ENCODE measurements at regions of chr2 and their contacts with region 1.

Region 1: GRCh38 chr2:156332534-156333273 is at the start of gene NR4A2:
- DNase-seq: no peak
- H3K4me3 ChIP-seq: peak within 1 kb of the TSS; percentile 75 to 84 (median 80)
- H3K27ac ChIP-seq: peak within 1 kb of the TSS; percentile 97 to 100 (median 99)
- H3K4me1 ChIP-seq: peaks cover 9 to 48% (median 34%) of the 10 kb centered on the region in 4 donors
- H3K27me3 ChIP-seq: no peaks in the 10 kb centered on the region
- CTCF ChIP-seq: no peak
- EP300 ChIP-seq: no peak
- POLR2A ChIP-seq: peak; percentile 83
- total RNA-seq, gene NR4A2: 0.42 to 2.8 (median 2.5) TPM

Region 2: DNA sequence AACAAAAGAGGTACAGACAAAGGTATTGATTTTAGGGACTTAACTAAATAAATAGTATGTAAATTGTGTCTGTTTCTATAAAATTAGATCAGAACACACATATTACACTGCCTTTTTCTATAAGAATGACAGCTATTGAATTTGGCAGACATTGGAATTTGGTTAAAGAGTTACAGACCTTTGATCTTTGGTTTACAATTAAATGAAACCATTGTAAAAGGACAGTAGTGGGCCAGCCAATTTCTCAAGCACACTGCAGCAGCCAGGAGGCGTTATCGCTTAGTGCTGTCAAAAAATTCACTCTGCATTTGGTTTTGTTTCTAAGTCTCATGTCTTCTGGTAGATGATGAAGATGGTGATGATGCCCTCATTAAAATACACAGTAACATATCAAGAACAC is 176.1 kb before region 1 on chr2:
- intact Hi-C with region 1: no loop called
- DNase-seq: no peak
- H3K4me3 ChIP-seq: no peak overlapping the region
- H3K27ac ChIP-seq: no peak overlapping the region
- H3K4me1 ChIP-seq: no peaks in the 10 kb centered on the region
- H3K27me3 ChIP-seq: peaks cover 0 to 8% (median 0%) of the 10 kb centered on the region in 4 donors
- CTCF ChIP-seq: peak in 2 of 3 experiments; percentile 16 to 19
- EP300 ChIP-seq: no peak
- POLR2A ChIP-seq: no peak

Region 3: DNA sequence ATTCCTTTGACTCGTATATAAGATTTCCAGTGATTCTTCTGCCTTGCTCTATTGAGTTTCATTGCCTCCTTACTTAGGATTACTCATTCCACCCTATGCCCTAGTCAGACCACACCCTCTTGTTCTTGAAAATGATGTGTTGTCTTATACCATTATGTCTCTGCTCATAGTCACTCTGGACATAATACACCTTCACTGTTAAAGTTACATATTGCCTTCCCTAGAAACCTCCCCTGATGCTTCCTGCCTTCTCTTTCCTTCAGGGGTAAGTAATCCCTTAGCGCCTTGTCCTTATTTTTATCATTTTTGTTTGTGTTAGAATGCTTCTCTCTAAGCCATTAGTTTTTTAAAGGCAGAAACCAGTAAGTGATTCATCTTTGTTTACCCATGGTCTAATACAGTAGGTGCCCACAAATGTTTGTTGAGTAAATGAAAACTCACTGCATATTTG is 122.8 kb after region 1 on chr2:
- intact Hi-C with region 1: no loop called
- DNase-seq: no peak
- H3K4me3 ChIP-seq: no peak overlapping the region
- H3K27ac ChIP-seq: no peak overlapping the region
- H3K4me1 ChIP-seq: peaks cover 7 to 21% (median 17%) of the 10 kb centered on the region in 4 donors
- H3K27me3 ChIP-seq: no peaks in the 10 kb centered on the region
- CTCF ChIP-seq: no peak
- EP300 ChIP-seq: no peak
- POLR2A ChIP-seq: no peak

Region 4: GRCh38 chr2:156649596-156649995 is 316.9 kb after region 1 on chr2:
- intact Hi-C with region 1: no loop called
- DNase-seq: no peak
- H3K4me3 ChIP-seq: no peak overlapping the region
- H3K27ac ChIP-seq: no peak overlapping the region
- H3K4me1 ChIP-seq: peaks cover 0 to 8% (median 6%) of the 10 kb centered on the region in 4 donors
- H3K27me3 ChIP-seq: no peaks in the 10 kb centered on the region
- CTCF ChIP-seq: no peak
- EP300 ChIP-seq: no peak
- POLR2A ChIP-seq: no peak

Region 5: GRCh38 chr2:157055660-157056199 is 723.0 kb after region 1 on chr2:
- intact Hi-C with region 1: loop called (anchors 10 kb)
- DNase-seq: no peak
- H3K4me3 ChIP-seq: peak overlapping the region in 1 of 4 donors; percentile 14
- H3K27ac ChIP-seq: peak overlapping the region in 2 of 4 donors; percentile 13 to 21
- H3K4me1 ChIP-seq: peaks cover 0 to 16% (median 9%) of the 10 kb centered on the region in 4 donors
- H3K27me3 ChIP-seq: no peaks in the 10 kb centered on the region
- CTCF ChIP-seq: peak; percentile 35 to 57 (median 45)
- EP300 ChIP-seq: no peak
- POLR2A ChIP-seq: no peak

Region 6: GRCh38 chr2:157107877-157108276 is 775.2 kb after region 1 on chr2:
- intact Hi-C with region 1: no loop called
- DNase-seq: no peak
- H3K4me3 ChIP-seq: no peak overlapping the region
- H3K27ac ChIP-seq: no peak overlapping the region
- H3K4me1 ChIP-seq: no peaks in the 10 kb centered on the region
- H3K27me3 ChIP-seq: no peaks in the 10 kb centered on the region
- CTCF ChIP-seq: no peak
- EP300 ChIP-seq: no peak
- POLR2A ChIP-seq: no peak

Region 7: DNA sequence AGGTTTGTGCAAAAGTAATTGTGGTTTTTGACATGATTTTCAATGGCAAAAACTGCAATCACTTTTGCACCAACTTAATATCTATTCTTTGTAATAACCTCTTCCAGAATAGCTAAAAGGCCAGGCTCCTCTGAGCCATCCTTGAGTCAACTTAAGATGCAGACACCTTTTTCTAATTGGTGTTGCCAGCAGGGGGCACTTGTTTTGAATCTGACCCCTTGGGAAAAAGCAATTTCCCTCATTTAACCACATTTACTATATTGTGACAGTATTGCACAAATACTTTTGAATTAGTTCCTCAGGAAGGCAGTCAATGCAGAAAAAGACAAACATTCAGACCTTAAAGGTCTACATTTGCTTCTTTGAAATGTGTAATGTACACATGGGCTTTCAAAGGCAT is 846.2 kb after region 1 on chr2:
- intact Hi-C with region 1: loop called (anchors 5 kb)
- DNase-seq: no peak
- H3K4me3 ChIP-seq: no peak overlapping the region
- H3K27ac ChIP-seq: no peak overlapping the region
- H3K4me1 ChIP-seq: peaks cover 0 to 7% (median 7%) of the 10 kb centered on the region in 4 donors
- H3K27me3 ChIP-seq: no peaks in the 10 kb centered on the region
- CTCF ChIP-seq: no peak
- EP300 ChIP-seq: no peak
- POLR2A ChIP-seq: no peak

Measured in esophagus muscularis mucosa (tissue), 4 donors.